Activated B cell treated with CpG ODN at 0.5 μM for 24 hours (primary cell): ENCODE measurements at regions of chr2 and their contacts with region 1.

Region 1: DNA sequence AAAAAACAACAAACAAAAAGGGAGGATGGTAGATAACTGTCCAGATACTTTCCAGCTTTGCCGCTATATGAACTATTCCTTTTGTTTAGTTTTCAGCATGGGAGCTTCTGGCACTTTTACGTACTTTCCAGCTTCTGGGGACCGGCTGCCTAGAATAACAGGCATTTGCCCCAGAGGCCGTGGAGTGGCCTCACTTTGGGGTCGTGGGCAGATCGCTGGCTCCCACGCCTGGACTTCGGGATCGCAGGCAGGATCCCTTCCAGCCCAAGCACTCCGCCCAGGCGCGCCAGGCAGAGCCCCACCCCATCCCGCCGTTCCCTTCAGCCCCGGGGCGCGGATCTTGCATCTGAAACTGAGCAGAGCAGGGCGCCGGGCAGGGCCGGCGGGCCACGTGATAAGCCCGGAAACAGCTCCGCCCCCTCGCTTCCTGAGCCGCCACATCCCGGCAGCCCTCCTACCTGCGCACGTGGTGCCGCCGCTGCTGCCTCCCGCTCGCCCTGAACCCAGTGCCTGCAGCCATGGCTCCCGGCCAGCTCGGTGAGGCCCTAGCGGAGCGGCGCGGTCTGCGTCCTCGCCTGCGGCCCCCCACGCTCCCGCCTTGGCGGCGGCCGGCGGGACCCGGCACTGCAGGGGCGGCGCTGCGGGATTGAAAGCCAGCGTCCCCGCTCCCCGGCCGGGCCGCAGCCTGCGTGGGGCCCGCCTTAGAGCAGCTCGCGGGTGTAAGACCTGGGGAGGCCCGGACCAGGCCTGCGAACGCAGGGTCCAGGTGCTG is at the start of gene ATIC:
- DNase-seq: peak; percentile 86
- ATAC-seq: peak; percentile 96
- H3K4me3 Mint-ChIP-seq: peak within 1 kb of the TSS; percentile 95
- H3K27ac Mint-ChIP-seq: peak within 1 kb of the TSS; percentile 91
- H3K4me1 Mint-ChIP-seq: peaks cover 35% of the 10 kb centered on the region
- H3K27me3 Mint-ChIP-seq: no peaks in the 10 kb centered on the region
- CTCF ChIP-seq: no peak
- total RNA-seq, gene ATIC: 161 and 179 TPM in 2 replicates

Region 2: DNA sequence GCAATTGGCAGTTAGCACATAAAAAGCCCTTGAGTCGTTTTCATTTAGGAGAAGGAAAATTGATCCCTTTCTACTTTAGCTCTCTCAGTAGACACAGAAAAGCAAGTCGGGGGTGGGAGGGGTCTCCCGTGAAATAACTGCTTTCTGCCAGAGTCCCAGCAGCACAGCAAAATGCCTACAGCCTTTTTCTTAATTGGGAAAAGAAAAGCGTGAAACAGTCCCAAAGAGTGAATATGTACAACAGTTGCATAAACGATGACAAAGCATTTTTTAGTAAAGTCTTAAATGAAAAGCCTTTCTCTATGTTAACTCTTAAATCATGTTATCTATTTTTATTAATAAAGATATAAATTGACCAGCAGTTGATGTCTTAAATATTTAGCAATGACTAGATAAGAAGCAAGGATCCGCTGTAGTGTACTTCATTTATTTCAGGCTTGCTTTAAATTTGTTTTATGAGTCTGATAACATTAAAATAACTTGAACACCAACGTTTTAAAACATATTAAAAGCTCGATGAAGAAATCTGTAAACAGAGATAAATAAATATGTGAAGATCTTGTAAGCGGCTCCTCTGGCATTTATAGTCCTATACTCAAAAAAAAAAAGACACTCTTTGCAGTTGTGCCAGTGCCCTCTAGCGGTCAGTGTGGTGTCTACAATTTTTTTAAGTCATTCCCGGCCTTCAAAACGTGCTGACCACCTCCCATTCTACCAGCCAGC is 42.3 kb before region 1 on chr2:
- CTCF ChIA-PET with region 1: no interaction called
- POLR2A ChIA-PET with region 1: no interaction called
- intact Hi-C with region 1: loop called (anchors 2 kb)
- DNase-seq: no peak
- ATAC-seq: no peak
- H3K4me3 Mint-ChIP-seq: no peak overlapping the region
- H3K27ac Mint-ChIP-seq: no peak overlapping the region
- H3K4me1 Mint-ChIP-seq: no peaks in the 10 kb centered on the region
- H3K27me3 Mint-ChIP-seq: no peaks in the 10 kb centered on the region
- CTCF ChIP-seq: peak; percentile 24

Region 3: DNA sequence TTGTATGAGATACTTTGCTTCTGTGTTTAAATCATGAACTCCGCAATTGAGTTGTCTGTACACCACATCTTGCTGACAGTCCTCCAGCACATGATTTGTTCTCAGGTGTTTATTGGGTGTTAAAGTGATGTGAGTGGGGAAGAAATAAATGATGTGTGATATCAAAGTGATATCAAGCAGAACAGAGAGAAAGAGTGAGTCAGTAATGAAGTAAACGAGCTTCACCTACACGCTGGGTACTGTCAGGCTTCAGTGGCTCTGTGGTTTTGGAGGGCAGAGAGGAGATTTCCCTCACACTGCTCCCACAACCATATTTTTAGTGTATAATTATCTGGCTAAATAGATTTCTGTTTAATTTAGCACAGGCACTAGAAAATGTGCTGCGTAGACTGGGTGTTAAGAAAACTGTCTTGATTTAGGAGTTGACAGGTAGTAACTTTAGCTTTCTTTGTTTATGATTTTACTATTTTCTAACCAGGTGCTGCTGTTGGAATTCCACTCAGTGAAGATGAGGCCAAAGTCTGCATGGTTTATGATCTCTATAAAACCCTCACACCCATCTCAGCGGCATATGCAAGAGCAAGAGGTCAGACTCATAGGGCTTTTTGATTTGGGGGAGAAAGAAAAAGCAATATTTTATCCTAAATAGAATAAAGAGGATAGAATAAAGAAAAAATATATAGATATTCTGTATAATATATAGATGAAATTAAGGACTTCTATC is 21.2 kb after region 1 on chr2:
- CTCF ChIA-PET with region 1: no interaction called
- POLR2A ChIA-PET with region 1: interaction called, 13 read pairs
- intact Hi-C with region 1: loop called (anchors 2 kb)
- DNase-seq: no peak
- ATAC-seq: peak; percentile 97
- H3K4me3 Mint-ChIP-seq: peak overlapping the region; percentile 15
- H3K27ac Mint-ChIP-seq: peak overlapping the region; percentile 67
- H3K4me1 Mint-ChIP-seq: peaks cover 14% of the 10 kb centered on the region
- H3K27me3 Mint-ChIP-seq: no peaks in the 10 kb centered on the region
- CTCF ChIP-seq: no peak

Region 4: GRCh38 chr2:215435809-215436704 is 124.2 kb after region 1 on chr2 and contains the start of gene FN1:
- CTCF ChIA-PET with region 1: no interaction called
- POLR2A ChIA-PET with region 1: no interaction called
- intact Hi-C with region 1: loop called (anchors 5 kb)
- DNase-seq: peak; percentile 32
- ATAC-seq: peak; percentile 84
- H3K4me3 Mint-ChIP-seq: peak within 1 kb of the TSS; percentile 81
- H3K27ac Mint-ChIP-seq: no peak within 1 kb of the TSS
- H3K4me1 Mint-ChIP-seq: peaks cover 17% of the 10 kb centered on the region
- H3K27me3 Mint-ChIP-seq: peaks cover 54% of the 10 kb centered on the region
- CTCF ChIP-seq: no peak
- total RNA-seq, gene FN1: 0.15 TPM in 1 of 2 replicates, not detected in the other

Region 5: DNA sequence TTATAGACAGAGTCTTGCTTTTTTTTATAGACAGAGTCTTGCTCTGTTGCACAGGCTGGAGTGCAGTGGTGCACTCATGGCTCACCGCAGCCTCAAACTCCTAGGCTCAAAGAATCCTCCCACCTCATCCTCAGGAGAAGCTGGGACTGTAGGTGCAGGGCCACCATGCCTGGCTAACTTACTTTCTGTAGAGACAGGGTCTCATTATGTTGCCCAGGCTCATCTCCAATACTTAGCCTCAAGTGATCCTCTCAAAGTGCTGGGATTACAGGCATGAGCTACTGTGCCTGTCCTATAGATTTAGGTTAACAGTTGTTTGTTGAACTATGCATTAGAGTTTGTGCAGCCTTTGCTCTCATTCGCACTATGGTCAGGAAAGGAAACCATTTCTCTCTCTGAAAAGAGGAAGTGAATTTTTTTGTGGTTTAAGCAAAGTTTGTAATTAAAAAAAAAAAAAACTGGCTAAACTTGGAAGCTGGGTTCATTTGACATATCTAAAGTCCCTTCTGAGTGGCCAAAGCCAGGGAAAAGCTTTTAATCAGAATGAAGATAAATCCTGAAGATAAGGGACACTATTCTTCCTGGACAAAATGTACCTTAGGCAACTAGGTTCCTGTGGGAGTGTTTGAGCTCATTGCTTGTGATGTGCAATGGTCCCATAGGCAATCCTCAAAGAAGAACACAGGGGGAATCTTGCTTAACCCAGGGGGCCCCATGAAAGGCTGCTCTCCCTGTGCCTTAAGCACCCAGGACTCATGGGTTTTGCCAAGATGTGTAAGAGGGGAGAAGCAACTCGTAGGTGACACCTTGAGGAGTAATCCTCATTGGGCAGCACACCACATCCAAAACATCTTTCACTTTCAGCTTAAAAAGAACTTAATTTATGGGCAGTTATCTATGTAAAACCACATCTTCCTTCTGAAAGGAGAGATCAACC is 499.9 kb after region 1 on chr2:
- CTCF ChIA-PET with region 1: no interaction called
- POLR2A ChIA-PET with region 1: no interaction called
- intact Hi-C with region 1: loop called (anchors 5 kb)
- DNase-seq: peak; percentile 19
- ATAC-seq: peak; percentile 89
- H3K4me3 Mint-ChIP-seq: peak overlapping the region; percentile 57
- H3K27ac Mint-ChIP-seq: peak overlapping the region; percentile 35
- H3K4me1 Mint-ChIP-seq: peaks cover 40% of the 10 kb centered on the region
- H3K27me3 Mint-ChIP-seq: peaks cover 2% of the 10 kb centered on the region
- CTCF ChIP-seq: no peak